ENCODE measurements at regions of chr7 and their contacts with region 1.

Region 1: GRCh38 chr7:111607621-111608020 is 45.3 kb upstream of the IMMP2L start:
- H3K4me3 ChIP-seq: no peak overlapping the region
- H3K27ac ChIP-seq: no peak overlapping the region
- H3K4me1 ChIP-seq: no peaks in the 10 kb centered on the region
- CTCF ChIP-seq: no peak

Region 2: DNA sequence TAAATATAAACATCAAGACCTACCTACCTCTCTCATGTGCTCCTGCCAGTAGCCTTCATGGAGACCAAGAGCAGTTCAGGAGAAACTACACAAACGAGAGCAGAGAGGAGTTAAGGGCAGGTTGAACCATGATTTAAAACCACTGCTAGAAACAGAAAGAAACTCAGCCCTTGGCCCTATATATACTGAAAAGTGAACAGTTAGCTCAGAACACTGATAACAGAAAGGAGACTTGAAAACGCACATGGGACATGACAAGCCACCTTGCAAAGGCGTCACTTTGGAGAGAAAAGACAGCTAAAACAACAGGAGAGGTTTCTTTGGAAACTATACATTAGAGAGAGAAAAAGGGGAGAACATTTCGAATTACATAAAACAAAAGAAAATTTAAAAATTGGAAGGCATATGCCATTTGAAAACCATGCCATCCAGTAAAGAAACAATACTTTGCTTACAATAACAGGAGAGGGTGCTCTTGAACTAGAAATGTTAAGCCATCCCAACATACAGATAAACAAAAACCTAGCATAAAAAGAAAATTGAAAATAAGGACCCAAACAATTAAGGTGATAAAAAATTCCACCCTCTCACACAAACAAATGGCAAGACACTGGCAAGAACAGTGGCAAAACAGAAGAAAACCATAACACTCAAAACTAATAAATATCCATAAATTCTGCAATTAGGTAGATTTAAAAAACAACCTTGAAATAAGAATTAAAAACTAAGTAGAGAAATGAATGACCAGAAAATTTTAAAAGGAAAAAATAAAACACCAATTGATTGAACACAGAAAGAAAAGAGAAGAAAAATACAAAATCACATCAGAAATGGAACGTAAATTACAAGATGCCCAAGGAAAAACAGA is 278.0 kb before region 1 on chr7:
- CTCF ChIA-PET with region 1: no interaction called
- POLR2A ChIA-PET with region 1: no interaction called
- H3K4me3 ChIP-seq: no peak overlapping the region
- H3K27ac ChIP-seq: no peak overlapping the region
- H3K4me1 ChIP-seq: no peaks in the 10 kb centered on the region
- CTCF ChIP-seq: peak; percentile 22; the same call in 1 of the 2 replicates

Region 3: GRCh38 chr7:111459756-111460280 is 147.8 kb before region 1 on chr7:
- CTCF ChIA-PET with region 1: no interaction called
- POLR2A ChIA-PET with region 1: interaction called, 10 read pairs
- H3K4me3 ChIP-seq: no peak overlapping the region
- H3K27ac ChIP-seq: no peak overlapping the region
- H3K4me1 ChIP-seq: no peaks in the 10 kb centered on the region
- CTCF ChIP-seq: no peak